Heart left ventricle (tissue), 16 donors: ENCODE measurements at regions of chr17 and their contacts with region 1.

Region 1: DNA sequence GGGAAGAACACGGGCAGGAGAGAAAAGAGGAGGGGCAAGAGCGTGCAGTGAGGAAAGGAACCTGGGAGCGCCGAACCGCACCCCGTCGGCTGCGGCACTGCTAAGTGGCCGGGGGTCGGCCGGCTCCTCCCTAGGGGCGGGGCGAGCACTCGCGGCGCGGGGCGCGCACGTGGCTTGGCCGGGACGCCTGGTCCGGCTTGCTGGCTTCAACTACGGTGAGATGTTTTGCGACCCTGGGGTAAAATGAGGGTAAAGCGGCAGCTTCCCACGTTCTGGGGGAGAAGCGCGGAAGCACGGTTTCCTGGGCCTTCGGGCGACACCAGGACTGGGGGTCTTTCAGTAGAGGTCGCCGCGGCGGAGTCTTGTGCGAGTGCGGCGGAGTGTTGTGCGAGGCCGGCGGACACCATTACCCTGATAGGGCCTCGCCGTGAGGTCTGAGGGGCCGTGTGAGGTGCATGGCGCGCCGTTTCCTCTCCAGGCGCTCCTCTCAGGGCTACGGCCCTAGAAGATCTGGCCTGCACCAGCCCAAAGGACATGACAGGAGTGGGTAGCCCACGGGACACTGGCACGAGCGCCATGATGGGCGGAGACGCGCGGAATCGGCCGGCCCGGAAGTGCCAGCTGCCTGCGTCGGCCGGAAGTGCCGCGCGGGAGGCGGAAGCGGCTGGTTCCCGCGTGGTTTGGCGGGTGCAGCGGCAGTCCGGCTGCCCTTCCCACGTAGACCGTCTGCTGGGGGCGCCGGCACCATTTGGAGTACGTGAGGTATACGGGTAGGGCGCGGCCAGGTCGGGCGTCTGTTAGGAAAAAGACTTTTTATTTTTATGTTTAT is at the starts of genes MYO19 and PIGW:
- DNase-seq: peak; percentile 87 to 94 (median 92)
- ATAC-seq: peak; percentile 85 to 95 (median 92)
- H3K4me3 ChIP-seq: peak within 1 kb of the TSS; percentile 38 to 94 (median 82)
- H3K27ac ChIP-seq: peak within 1 kb of the TSS; percentile 84 to 99 (median 96)
- H3K4me1 ChIP-seq: peaks cover 0 to 22% (median 14%) of the 10 kb centered on the region in 12 donors
- H3K27me3 ChIP-seq: no peaks in the 10 kb centered on the region
- CTCF ChIP-seq: peak in 3 of 12 donors; percentile 13 to 29 (median 26)
- POLR2A ChIP-seq: peak in 1 of 2 donors; percentile 83
- total RNA-seq, gene MYO19: 5.8 to 32.7 (median 11.6) TPM
- total RNA-seq, gene PIGW: 2.1 to 7.9 (median 5.7) TPM

Region 2: GRCh38 chr17:36496018-36496789 is 38.9 kb before region 1 on chr17:
- intact Hi-C with region 1: loop called in 2 of 10 experiments (anchors 5 kb)
- DNase-seq: no peak
- ATAC-seq: peak in 1 of 4 donors; percentile 15
- H3K4me3 ChIP-seq: no peak overlapping the region
- H3K27ac ChIP-seq: no peak overlapping the region
- H3K4me1 ChIP-seq: peaks cover 0 to 12% (median 0%) of the 10 kb centered on the region in 12 donors
- H3K27me3 ChIP-seq: no peaks in the 10 kb centered on the region
- CTCF ChIP-seq: no peak
- POLR2A ChIP-seq: no peak

Region 3: DNA sequence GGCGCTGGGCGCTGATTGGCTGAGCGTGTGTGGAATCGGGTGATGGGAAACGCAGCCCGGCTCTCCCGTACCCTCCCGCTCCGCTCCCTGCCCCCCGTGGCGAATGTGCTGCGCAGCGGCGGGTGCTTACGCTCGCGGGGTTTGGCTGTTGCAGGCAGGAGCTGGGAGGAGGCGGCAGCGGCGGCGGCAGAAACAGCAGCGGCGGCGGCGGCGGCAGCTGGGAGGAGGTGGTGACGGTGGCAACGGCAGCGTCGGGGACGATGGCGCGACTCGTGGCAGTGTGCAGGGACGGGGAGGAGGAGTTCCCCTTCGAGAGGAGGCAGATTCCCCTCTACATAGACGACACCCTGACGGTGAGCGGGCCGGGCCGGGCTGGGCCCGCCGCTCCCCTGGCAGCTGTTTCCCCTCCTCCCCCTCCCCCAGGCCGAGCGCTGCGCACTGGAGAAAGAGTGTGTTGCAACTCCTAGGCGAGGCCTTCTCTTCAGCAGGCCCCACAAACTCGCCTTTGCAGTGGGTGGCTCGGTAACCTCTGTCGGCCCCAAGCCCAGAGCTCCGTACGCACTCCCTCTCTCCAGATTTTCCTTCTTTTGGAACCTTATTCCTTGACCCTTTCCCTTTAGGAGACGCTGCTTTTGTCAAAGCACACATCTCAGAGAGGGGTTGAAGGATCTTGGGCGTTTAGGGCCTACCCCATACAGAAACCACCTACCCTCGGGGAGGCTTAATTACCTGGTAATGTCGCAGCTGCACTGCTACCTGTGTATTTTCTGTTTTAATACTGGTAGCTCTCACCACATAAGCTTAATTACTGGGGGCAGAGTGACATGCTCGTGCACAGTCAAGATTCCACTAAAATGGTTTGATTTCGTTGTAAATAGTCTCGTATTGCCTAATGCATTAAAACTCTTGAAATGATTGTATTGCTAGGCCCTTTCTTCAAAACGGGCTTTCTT is 10.7 kb after region 1 on chr17:
- intact Hi-C with region 1: loop called in 2 of 10 experiments (anchors 1 kb)
- DNase-seq: peak; percentile 96 to 97 (median 97)
- ATAC-seq: peak; percentile 90 to 95 (median 93)
- H3K4me3 ChIP-seq: peak overlapping the region; percentile 63 to 99 (median 84)
- H3K27ac ChIP-seq: peak overlapping the region; percentile 93 to 100 (median 99)
- H3K4me1 ChIP-seq: peaks cover 12 to 58% (median 43%) of the 10 kb centered on the region in 12 donors
- H3K27me3 ChIP-seq: no peaks in the 10 kb centered on the region
- CTCF ChIP-seq: no peak
- POLR2A ChIP-seq: peak in 1 of 2 donors; percentile 48

Region 4: GRCh38 chr17:36601303-36602029 is 66.4 kb after region 1 on chr17 and contains the start of gene MRM1:
- intact Hi-C with region 1: loop called in 1 of 10 experiments (anchors 2 kb)
- DNase-seq: peak; percentile 94 to 97 (median 95)
- ATAC-seq: peak; percentile 93 to 98 (median 94)
- H3K4me3 ChIP-seq: peak within 1 kb of the TSS; percentile 51 to 98 (median 77)
- H3K27ac ChIP-seq: peak within 1 kb of the TSS; percentile 14 to 87 (median 79)
- H3K4me1 ChIP-seq: peaks cover 0 to 30% (median 18%) of the 10 kb centered on the region in 12 donors
- H3K27me3 ChIP-seq: no peaks in the 10 kb centered on the region
- CTCF ChIP-seq: peak in 4 of 12 donors; percentile 5 to 28 (median 22)
- POLR2A ChIP-seq: peak in 1 of 2 donors; percentile 85
- total RNA-seq, gene MRM1: 4.0 to 12.4 (median 7.2) TPM